Astrocyte of the cerebellum (primary cell): ENCODE measurements at regions of chr18 and their contacts with region 1.

Region 1: GRCh38 chr18:79863161-79863945 is 65.6 kb downstream of the KCNG2 start:
- DNase-seq: no peak
- H3K4me3 ChIP-seq: no peak overlapping the region
- CTCF ChIP-seq: no peak

Region 2: DNA sequence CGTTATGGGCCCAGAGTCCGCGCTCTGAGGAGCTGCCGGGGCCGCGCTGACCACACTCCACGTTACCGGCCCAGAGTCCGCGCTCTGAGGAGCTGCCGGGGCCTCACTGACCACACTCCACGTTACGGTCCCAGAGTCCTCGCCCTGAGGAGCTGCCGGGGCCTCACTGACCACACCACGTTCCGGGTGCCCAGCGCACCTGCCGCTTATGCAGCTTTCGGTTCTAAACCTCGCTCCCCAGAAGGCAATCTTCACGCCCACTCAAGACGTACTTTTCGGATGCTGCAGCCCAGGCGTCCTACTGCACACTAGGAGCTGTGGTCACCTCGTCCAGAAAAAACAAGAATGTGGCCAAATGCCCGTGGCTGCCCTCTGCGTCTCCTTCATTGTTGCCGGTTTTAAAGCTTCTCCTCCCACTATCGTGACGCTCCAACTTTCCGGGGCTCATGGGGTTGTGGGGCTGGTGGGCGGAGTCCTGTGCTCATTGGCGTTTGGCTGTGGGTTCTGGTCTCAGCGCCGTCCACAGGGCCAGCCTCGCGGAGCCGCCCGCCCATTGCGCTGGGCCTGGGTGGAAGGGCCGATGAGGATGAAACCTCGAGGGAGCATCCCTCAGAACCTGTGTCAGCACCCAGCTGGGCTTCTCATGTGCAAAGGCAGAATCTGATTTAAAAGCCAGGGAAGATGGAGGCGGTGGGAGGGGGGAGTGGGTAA is 53.7 kb before region 1 on chr18:
- in situ Hi-C with region 1: loop called (anchors 5 kb)
- DNase-seq: no peak
- H3K4me3 ChIP-seq: no peak overlapping the region
- CTCF ChIP-seq: no peak

Region 3: DNA sequence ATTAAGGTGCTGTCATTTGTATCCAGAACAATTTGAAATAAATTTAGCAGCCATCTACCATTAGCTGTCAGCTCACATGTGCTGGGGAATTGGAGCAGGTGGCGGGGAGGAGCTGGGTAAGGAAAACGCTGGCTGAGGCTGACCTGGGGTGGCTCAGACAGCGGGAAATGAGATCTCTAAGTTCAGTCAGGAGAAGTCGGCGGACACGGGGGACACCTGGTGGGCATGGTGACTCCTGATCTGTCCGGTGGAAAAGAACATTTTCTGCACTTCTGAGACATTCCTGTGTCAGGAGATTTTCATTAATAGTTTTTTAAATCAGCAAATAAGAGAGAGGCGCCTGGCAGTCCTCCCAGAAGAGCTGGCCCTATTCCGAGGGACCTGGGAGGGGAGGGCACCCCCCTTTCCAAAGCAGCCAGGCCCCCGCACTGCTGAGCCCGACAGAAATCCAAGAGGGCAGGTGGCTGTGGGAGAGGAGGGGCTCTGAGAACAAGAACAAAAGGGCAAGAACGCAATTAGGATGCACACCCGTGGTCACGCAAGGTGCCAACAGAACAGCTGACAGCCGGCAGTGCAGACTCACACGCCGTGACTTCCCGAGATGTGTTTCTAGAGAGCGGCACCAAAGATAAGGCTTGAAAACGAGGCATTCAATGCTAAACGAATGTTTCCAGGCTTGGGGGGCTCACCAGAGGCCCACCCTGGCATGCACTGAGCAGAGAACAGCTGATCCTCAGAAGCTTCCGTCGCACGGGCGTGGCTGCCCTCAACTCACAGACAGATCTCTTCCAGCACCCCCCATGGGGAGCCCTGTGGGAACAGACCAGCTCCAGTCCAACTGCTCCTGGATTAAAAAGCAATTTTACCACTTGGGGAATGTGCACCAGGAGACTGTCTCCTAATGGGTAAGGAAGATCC is 61.7 kb after region 1 on chr18:
- in situ Hi-C with region 1: loop called (anchors 5 kb)
- DNase-seq: no peak
- H3K4me3 ChIP-seq: no peak overlapping the region
- CTCF ChIP-seq: no peak